Stomach (tissue), 19 donors: ENCODE measurements at regions of chr17 and their contacts with region 1.

Region 1: DNA sequence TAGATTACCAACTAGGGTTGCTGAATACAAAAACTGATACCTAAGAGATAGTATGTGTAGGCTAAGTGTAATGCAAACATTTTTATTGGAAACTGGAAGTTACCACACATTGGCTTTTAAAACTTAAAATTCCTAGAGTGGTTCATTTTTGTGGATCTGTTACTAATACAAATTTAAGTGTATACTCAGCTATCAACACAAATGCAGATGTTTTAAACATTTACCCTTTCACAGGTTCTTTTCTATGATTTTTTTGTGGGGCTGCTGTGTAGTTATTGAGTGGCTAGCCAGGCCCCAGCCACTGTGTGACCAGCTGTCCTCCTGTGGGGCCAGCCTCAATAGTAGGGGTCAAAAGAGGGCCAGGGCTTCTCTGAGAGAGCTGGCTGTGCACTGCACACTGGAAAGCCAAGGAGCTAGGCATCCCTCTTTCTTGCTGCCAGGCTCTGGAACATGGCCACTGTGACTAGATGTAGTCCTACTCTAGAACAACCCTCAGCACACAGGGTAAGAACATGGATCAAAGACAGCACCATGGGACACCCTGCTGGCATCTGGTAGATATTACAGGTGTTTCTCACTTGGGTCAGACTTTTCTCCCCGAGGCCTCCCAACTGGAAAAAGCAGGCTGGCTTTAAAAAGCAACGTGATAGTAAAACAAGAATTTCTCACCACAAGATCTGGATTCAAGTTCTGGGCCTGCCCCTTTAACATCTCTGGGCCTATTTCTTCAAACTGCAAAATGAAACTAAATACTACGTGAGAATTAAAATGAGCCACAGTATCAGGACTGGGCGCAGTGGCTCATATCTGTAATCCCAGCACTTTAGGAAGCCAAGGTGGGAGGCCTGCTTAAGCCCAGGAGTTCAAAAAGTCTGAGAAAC is 7.3 kb upstream of the VEZF1 start:
- DNase-seq: peak; percentile 66 to 92
- H3K4me3 ChIP-seq: no peak overlapping the region
- H3K27ac ChIP-seq: peak overlapping the region; percentile 6 to 74 (median 47)
- H3K4me1 ChIP-seq: peaks cover 21 to 56% (median 37%) of the 10 kb centered on the region in 4 donors
- H3K27me3 ChIP-seq: no peaks in the 10 kb centered on the region
- CTCF ChIP-seq: peak in 5 of 7 experiments; percentile 47 to 76 (median 72)
- EP300 ChIP-seq: no peak
- POLR2A ChIP-seq: no peak

Region 2: GRCh38 chr17:57755480-57756070 is 239.7 kb before region 1 on chr17:
- intact Hi-C with region 1: no loop called
- DNase-seq: no peak
- H3K4me3 ChIP-seq: no peak overlapping the region
- H3K27ac ChIP-seq: no peak overlapping the region
- H3K4me1 ChIP-seq: peaks cover 0 to 5% (median 1%) of the 10 kb centered on the region in 4 donors
- H3K27me3 ChIP-seq: peaks cover 0 to 6% (median 0%) of the 10 kb centered on the region in 3 donors
- CTCF ChIP-seq: no peak
- EP300 ChIP-seq: no peak
- POLR2A ChIP-seq: no peak

Region 3: DNA sequence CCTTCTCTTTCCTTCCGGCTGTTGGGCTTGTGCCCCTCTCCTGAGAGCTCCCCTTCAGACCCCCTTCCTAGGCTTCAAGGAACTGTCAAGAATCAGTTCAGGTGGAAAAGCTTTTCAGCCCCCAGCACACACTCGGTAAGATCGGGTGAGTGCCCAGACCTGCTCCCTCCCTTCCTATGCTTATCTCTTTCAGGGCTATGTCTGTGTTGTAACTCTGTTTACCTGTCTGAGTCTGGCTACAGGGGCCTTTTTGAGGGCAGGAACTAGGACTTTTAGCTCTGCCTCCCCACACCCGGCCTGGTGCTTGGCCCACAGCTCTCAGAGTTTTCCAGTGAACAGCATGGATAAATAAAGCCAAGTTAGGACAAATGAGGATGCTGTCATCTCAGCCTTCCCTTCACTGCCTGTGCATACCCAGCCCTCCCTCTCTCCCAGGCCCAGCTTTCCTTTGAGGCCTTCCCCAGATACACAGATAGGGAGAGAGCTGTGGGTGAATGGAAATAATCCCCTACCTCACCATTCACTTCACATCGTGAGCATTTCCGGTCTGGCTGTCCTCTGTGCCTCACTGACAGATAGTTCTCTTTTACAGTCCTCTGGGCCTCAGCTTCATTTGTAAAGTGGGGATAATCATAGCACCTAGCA is 139.8 kb before region 1 on chr17:
- intact Hi-C with region 1: loop called (anchors 5 kb)
- DNase-seq: peak in 1 of 2 donors; percentile 50
- H3K4me3 ChIP-seq: no peak overlapping the region
- H3K27ac ChIP-seq: peak overlapping the region; percentile 25 to 97 (median 95)
- H3K4me1 ChIP-seq: peaks cover 54 to 88% (median 77%) of the 10 kb centered on the region in 4 donors
- H3K27me3 ChIP-seq: no peaks in the 10 kb centered on the region
- CTCF ChIP-seq: no peak
- EP300 ChIP-seq: no peak
- POLR2A ChIP-seq: no peak